ENCODE measurements at regions of chr4 and their contacts with region 1.

Region 1: GRCh38 chr4:137370206-137370633 is 162.1 kb downstream of the PCDH18 start:
- DNase-seq: peak; percentile 71
- H3K4me3 Mint-ChIP-seq: no peak overlapping the region
- H3K27ac Mint-ChIP-seq: peak overlapping the region; percentile 92
- H3K4me1 Mint-ChIP-seq: peaks cover 47% of the 10 kb centered on the region
- H3K27me3 Mint-ChIP-seq: no peaks in the 10 kb centered on the region
- CTCF ChIP-seq: no peak

Region 2: GRCh38 chr4:137310593-137311490 is 59.4 kb before region 1 on chr4:
- CTCF ChIA-PET with region 1: no interaction called
- POLR2A ChIA-PET with region 1: no interaction called
- intact Hi-C with region 1: loop called (anchors 5 kb)
- DNase-seq: peak; percentile 46
- H3K4me3 Mint-ChIP-seq: no peak overlapping the region
- H3K27ac Mint-ChIP-seq: peak overlapping the region; percentile 97
- H3K4me1 Mint-ChIP-seq: peaks cover 33% of the 10 kb centered on the region
- H3K27me3 Mint-ChIP-seq: no peaks in the 10 kb centered on the region
- CTCF ChIP-seq: no peak

Region 3: DNA sequence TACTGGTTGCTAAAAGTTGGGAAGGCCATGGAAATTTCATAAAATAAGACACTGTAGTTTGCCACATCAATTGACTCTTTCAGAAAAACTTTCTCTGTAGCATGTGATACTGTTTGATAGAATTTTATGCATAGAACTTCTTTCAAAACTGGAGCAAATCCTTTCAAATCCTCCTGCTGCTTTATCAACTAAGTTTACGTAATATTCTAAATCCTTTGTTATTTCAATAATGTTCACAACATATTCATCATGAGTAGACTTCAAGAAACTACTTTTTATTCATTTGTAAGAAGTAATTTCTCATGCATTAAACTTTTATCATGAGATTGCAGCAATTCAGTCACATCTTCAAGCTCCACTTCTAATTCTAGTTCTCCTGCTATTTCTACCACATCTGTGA is 37.2 kb before region 1 on chr4:
- CTCF ChIA-PET with region 1: no interaction called
- POLR2A ChIA-PET with region 1: no interaction called
- intact Hi-C with region 1: no loop called
- DNase-seq: no peak
- H3K4me3 Mint-ChIP-seq: no peak overlapping the region
- H3K27ac Mint-ChIP-seq: no peak overlapping the region
- H3K4me1 Mint-ChIP-seq: no peaks in the 10 kb centered on the region
- H3K27me3 Mint-ChIP-seq: no peaks in the 10 kb centered on the region
- CTCF ChIP-seq: no peak

Region 4: GRCh38 chr4:137635108-137635507 is 264.9 kb after region 1 on chr4:
- CTCF ChIA-PET with region 1: no interaction called
- POLR2A ChIA-PET with region 1: no interaction called
- intact Hi-C with region 1: loop called (anchors 5 kb)
- DNase-seq: peak; percentile 93
- H3K4me3 Mint-ChIP-seq: peak overlapping the region; percentile 61
- H3K27ac Mint-ChIP-seq: peak overlapping the region; percentile 97
- H3K4me1 Mint-ChIP-seq: peaks cover 16% of the 10 kb centered on the region
- H3K27me3 Mint-ChIP-seq: no peaks in the 10 kb centered on the region
- CTCF ChIP-seq: no peak

Measured in MCF 10A (cell line).